Spleen (tissue), 13 donors: ENCODE measurements at regions of chr15 and their contacts with region 1.

Region 1: DNA sequence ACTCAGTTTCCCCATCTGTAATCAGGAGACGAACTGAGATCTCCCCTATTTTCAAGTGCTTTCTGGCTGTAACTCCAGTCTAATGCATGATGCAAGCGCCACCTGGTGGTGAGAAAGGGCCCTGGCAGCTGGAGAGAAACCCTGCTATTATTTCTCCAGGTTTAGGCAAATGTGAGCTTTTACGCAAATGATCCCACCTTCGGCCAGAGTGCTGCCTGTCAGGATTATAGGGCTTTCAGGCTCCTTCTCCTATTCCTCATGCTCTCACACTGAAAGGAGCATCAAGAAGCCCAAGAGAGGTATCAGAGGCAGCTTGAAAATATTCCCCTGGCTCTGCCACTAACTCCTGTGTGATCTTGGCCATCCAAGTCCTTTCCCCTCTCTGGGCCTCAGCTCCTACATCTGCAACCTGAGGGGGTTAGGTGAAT is 93.9 kb upstream of the RASGRF1 start:
- DNase-seq: peak; percentile 88
- H3K4me3 ChIP-seq: no peak overlapping the region
- H3K27ac ChIP-seq: no peak overlapping the region
- H3K4me1 ChIP-seq: peaks cover 0 to 5% (median 0%) of the 10 kb centered on the region in 6 donors
- H3K27me3 ChIP-seq: peaks cover 0 to 4% (median 0%) of the 10 kb centered on the region in 7 donors
- CTCF ChIP-seq: peak; percentile 66 to 96 (median 91)
- POLR2A ChIP-seq: no peak

Region 2: GRCh38 chr15:78909791-78910228 is 274.7 kb before region 1 on chr15:
- intact Hi-C with region 1: loop called (anchors 5 kb)
- DNase-seq: no peak
- H3K4me3 ChIP-seq: no peak overlapping the region
- H3K27ac ChIP-seq: peak overlapping the region in 1 of 8 donors; percentile 44
- H3K4me1 ChIP-seq: peaks cover 0 to 98% (median 34%) of the 10 kb centered on the region in 6 donors
- H3K27me3 ChIP-seq: no peaks in the 10 kb centered on the region
- CTCF ChIP-seq: peak; percentile 17 to 71 (median 59)
- POLR2A ChIP-seq: no peak

Region 3: DNA sequence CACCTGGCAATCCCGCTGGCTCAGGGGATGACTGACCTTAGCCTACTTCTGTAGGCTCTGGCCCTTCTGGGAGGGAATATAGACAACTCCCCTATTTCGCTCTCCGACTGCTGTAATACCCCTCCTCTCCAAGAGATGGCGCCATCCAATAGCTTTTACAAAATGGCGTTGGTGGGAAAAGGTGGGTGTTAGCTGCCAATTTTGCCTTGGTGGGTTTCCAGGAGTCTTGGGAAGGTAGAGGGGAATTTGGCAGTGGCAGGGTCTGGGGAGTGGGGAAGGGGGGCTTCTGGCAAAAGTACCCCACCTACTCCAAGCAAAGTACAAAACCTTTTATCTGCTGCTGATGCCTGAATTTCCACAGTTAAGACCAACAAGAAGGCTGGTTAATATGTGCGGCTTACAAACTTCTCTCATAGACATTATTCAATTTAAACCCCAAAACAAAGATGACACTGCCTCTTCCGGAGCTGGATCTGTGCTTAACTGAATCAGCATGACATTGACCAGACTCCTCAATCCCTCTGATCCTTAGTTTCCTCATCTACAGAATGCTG is 156.0 kb before region 1 on chr15:
- intact Hi-C with region 1: loop called (anchors 2 kb)
- DNase-seq: no peak
- H3K4me3 ChIP-seq: no peak overlapping the region
- H3K27ac ChIP-seq: no peak overlapping the region
- H3K4me1 ChIP-seq: no peaks in the 10 kb centered on the region
- H3K27me3 ChIP-seq: no peaks in the 10 kb centered on the region
- CTCF ChIP-seq: peak; percentile 46 to 81 (median 73)
- POLR2A ChIP-seq: no peak